Activated T-helper 2 cell treated with anti-CD3 and anti-CD28 coated beads, Interferon-gamma antibody, Interleukin-2, Interleukin-4, amounts not matched to agents 10 μg/mL and 5 μg/mL and 100 μg/mL, durations not matched to agents 14 hours and 24 hours and 36 hours (primary cell): ENCODE measurements at regions of chr6 and their contacts with region 1.

Region 1: GRCh38 chr6:135624402-135625295 is 127.1 kb upstream of the AHI1 start:
- DNase-seq: peak; percentile 37
- H3K4me3 Mint-ChIP-seq: peak overlapping the region; percentile 20
- H3K27ac Mint-ChIP-seq: peak overlapping the region; percentile 98
- H3K4me1 Mint-ChIP-seq: peaks cover 69% of the 10 kb centered on the region
- H3K27me3 Mint-ChIP-seq: no peaks in the 10 kb centered on the region

Region 2: GRCh38 chr6:135568366-135568765 is 56.3 kb before region 1 on chr6:
- intact Hi-C with region 1: loop called (anchors 1 kb)
- DNase-seq: peak; percentile 66
- H3K4me3 Mint-ChIP-seq: no peak overlapping the region
- H3K27ac Mint-ChIP-seq: peak overlapping the region; percentile 94
- H3K4me1 Mint-ChIP-seq: peaks cover 71% of the 10 kb centered on the region
- H3K27me3 Mint-ChIP-seq: no peaks in the 10 kb centered on the region

Region 3: DNA sequence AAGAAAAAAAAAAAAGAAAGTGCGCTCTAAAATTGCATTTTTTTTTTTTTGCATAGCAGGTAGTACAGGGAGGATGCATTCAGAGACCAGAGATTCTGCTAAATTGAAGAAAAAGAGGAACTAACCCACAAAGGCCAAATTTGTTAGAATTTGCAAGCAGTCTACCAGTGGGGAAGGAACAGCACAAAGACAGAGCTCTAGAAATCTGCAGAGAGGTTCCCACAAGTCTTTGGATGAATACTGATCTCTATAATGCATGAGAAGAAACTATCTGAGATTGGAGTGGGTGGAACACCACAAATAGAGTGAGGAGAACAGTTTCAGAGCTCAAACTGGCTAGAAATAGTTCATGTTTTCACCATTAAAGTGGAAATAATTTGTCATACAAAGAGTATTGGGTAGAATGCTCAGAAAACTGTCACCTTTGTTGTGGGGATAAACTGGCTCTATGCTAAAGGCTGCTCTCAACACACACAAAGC is 47.5 kb before region 1 on chr6:
- intact Hi-C with region 1: loop called (anchors 2 kb)
- DNase-seq: no peak
- H3K4me3 Mint-ChIP-seq: peak overlapping the region; percentile 39
- H3K27ac Mint-ChIP-seq: peak overlapping the region; percentile 99
- H3K4me1 Mint-ChIP-seq: peaks cover 57% of the 10 kb centered on the region
- H3K27me3 Mint-ChIP-seq: no peaks in the 10 kb centered on the region

Region 4: DNA sequence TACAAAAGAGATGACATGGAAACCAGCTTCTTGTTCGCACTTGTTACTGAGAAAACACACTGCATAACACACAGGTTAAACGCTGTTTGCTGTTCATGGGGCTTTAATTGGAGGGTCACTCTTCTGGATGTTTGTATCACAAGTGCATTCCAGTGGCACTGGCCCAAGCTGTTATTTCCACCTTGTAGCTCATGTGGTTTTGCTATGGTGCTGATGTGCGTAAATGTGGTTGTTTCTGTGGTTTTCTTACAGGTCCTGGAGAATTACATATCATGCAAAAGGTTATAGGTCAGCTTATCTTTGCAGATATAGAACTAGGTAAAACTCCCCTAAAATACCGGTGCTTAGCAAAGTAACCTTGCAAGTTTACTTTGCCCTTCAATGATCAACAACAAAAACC is 37.8 kb before region 1 on chr6:
- intact Hi-C with region 1: loop called (anchors 1 kb)
- DNase-seq: peak; percentile 55
- H3K4me3 Mint-ChIP-seq: no peak overlapping the region
- H3K27ac Mint-ChIP-seq: peak overlapping the region; percentile 95
- H3K4me1 Mint-ChIP-seq: peaks cover 75% of the 10 kb centered on the region
- H3K27me3 Mint-ChIP-seq: no peaks in the 10 kb centered on the region

Region 5: DNA sequence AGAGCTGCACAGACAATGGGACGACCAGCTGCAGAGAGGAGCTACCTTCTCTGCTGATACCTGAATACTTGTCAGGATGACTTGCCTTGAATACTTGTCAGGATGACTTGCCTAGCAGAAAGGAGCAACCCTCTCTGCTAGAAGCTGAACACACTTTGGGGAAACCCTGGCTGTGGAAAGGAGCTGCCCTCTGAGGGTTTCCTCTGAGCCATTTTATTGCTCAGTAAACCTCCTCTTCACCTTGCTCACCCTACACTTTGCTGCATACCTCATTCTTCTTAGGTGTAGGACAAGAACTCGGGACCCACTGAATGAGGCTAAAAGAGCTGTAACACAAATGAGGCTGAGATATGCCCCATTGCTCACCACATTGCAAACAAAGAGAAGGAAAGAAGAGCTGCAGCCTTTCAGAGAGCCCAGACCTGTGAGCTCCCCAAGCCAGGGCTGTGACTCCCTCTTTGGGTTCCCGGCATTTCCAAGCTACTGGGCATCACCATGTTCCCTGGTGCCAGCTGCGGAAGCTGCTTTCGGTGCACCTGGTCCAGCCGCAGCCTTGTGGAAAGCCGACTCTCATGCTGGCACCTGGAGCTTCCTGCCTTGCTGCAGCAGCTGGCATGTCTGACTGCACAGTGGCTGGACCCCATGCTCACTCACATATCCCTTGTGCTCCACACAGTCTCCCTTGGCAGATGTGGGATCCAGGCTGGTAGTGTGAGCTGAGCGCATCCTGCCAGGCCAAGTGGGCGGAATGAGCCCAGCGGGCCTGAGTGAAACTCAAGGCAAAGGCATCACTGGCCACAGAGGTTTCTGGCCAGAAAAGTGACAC is 20.4 kb before region 1 on chr6:
- intact Hi-C with region 1: loop called (anchors 2 kb)
- DNase-seq: no peak
- H3K4me3 Mint-ChIP-seq: no peak overlapping the region
- H3K27ac Mint-ChIP-seq: peak overlapping the region; percentile 70
- H3K4me1 Mint-ChIP-seq: peaks cover 34% of the 10 kb centered on the region
- H3K27me3 Mint-ChIP-seq: no peaks in the 10 kb centered on the region

Region 6: DNA sequence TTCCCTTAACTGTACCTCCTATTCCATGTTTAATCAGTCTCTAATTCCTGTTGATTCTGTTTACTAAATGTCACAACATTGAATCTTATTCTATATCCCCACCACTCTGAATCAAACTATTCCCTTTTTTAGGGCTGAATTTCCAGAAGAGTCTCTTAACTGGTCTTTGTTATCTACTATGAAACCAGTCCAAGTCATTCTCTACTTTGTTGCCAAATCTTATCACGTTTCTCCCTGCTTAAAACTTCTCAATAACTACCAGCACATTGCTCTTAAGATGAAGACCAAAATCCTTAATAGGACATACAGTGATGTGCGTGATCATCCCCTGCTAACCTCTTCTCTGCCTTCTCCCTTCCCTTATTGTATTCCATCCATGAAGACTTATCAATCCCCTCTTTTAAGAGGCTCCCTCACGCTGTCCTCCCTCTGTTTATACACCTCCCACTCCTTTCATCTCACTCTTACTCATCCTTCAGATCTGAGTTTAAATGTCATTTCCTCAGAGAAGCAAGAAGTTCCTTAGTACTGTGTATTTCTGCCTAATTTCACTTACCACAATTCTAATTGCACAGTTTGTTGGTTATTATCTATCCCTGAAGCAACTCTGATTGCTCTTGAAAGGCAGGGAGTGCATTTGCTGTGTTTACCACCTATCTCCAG is 15.9 kb after region 1 on chr6:
- intact Hi-C with region 1: loop called (anchors 1 kb)
- DNase-seq: no peak
- H3K4me3 Mint-ChIP-seq: peak overlapping the region; percentile 64
- H3K27ac Mint-ChIP-seq: peak overlapping the region; percentile 94
- H3K4me1 Mint-ChIP-seq: peaks cover 63% of the 10 kb centered on the region
- H3K27me3 Mint-ChIP-seq: no peaks in the 10 kb centered on the region